ENCODE measurements at regions of chr11 and their contacts with region 1.

Region 1: DNA sequence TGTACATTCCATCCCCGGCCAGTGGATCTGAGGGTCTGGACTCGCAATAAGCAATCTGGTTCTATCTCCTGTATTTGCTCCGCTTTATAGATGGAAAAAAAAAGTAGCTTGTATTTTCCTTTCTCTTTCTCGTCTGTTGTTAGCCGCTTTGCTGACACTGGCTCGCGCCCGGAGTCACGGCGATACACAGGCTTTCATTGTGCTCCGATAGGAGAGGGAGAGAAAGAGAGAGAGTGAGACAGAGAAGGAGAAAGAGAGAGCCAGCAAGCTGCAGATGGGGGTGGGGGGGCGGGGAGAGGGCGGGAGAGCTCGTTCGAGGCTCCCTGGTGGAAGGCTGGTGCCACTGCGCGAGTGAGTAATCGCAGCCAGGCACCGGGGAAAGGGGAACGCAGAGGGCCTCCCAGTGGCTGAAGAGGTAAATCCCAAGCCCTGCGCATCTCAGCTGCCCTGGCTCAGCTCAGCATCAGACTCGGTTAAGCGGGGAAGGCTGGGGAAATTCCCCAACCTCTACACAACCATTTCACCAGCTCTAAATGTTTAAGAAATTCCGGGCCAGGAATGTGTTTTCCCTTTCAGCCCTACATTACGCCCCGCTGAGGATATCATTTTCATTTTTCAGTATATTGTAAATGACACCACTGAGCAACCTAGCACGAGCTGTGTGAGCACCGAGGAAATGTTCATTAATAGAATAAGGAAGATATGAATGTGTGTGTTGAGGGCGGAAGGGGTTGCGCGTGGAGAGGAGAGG is at the start of gene MAML2:
- DNase-seq: peak; percentile 93
- H3K4me3 Mint-ChIP-seq: peak within 1 kb of the TSS; percentile 95
- H3K27ac Mint-ChIP-seq: peak within 1 kb of the TSS; percentile 94
- H3K4me1 Mint-ChIP-seq: peaks cover 35% of the 10 kb centered on the region
- H3K27me3 Mint-ChIP-seq: no peaks in the 10 kb centered on the region
- CTCF ChIP-seq: peak; percentile 97
- total RNA-seq, gene MAML2: 5.3 and 8.6 TPM in 2 replicates

Region 2: DNA sequence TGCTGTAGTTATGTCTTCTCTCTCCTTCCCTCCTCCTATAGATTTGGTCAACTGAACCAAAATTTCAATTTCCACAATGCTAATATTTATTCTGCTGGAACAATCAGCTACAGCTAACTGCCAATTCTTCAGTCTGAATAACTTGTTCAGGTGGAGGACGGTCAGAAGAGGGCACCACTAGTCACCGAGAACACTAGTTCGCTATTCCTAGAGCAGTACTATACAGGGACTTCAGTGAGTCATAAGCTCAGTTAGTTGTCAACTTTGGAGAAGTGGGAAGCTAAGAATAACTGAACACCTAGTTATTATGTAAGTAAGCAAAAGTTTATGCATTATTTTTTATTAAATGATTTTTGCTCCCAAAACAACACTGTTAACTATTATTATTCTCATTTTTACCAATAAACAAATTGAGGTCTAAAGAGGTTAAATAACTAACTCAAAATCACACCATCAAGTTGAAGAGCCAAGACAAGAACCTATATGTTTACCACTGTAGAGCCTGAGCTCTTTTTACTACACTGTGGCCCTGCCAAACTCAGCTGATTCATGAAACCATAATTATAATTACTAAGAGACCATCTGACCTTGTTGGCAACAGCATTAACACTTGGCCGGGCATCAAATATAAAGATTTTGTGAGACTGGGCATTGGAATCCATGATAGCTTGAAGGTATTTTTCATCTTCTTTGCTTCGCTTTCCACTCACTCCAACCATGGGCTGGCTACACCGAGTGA is 493.9 kb before region 1 on chr11:
- CTCF ChIA-PET with region 1: interaction called, 21 read pairs
- POLR2A ChIA-PET with region 1: interaction called, 15 read pairs
- intact Hi-C with region 1: loop called (anchors 1 kb)
- DNase-seq: peak; percentile 76
- H3K4me3 Mint-ChIP-seq: no peak overlapping the region
- H3K27ac Mint-ChIP-seq: no peak overlapping the region
- H3K4me1 Mint-ChIP-seq: peaks cover 5% of the 10 kb centered on the region
- H3K27me3 Mint-ChIP-seq: no peaks in the 10 kb centered on the region
- CTCF ChIP-seq: peak; percentile 37

Region 3: GRCh38 chr11:96054870-96055705 is 288.0 kb before region 1 on chr11:
- CTCF ChIA-PET with region 1: interaction called, 200 read pairs
- POLR2A ChIA-PET with region 1: interaction called, 40 read pairs
- intact Hi-C with region 1: loop called (anchors 1 kb)
- DNase-seq: peak; percentile 49
- H3K4me3 Mint-ChIP-seq: no peak overlapping the region
- H3K27ac Mint-ChIP-seq: peak overlapping the region; percentile 61
- H3K4me1 Mint-ChIP-seq: peaks cover 13% of the 10 kb centered on the region
- H3K27me3 Mint-ChIP-seq: no peaks in the 10 kb centered on the region
- CTCF ChIP-seq: peak; percentile 47

Region 4: DNA sequence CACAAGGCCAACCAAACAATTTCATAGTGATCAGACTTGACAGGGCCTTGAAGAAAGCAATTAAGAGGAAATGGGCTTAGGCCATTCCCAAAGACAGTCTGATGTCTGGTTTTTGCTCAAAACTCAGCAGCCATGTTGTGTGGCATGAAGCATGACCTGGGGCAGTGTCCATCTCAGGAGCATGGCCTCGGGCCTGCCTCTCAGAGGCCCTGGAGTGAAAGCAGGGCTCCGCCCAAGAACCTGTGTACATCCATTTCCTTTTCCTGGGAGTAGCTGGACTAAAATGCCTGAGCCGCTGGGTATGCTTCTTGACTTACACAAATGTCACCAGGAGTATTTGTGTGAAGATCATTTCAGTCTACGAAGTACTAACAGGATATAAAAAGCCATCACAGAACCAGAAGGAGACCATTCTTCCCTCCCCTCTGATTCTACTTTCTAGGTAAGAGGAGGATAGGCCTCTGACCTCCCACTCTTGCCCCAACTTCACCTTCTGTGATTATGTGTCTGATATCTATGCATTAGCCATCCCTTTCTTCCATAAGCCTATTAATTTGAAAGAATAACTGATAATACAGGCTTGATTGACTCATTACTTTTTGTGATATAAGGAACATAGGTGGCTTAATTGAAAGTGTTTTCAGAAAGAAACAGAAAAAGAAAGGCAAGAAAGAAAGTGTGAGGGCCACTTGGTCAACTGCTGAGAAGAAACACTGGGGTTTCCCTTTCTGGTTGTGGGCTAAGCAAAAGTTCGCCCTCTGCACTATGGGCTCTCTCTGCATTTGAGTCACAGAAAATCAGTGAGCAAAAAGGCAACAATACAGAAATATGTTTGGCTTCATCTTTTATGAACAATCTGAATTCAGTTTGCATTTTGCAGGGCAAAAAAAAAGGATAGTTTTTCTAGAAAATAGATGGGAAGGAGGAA is 230.7 kb before region 1 on chr11:
- CTCF ChIA-PET with region 1: interaction called, 17 read pairs
- POLR2A ChIA-PET with region 1: interaction called, 3 read pairs
- intact Hi-C with region 1: no loop called
- DNase-seq: no peak
- H3K4me3 Mint-ChIP-seq: no peak overlapping the region
- H3K27ac Mint-ChIP-seq: peak overlapping the region; percentile 54
- H3K4me1 Mint-ChIP-seq: peaks cover 22% of the 10 kb centered on the region
- H3K27me3 Mint-ChIP-seq: no peaks in the 10 kb centered on the region
- CTCF ChIP-seq: no peak

Region 5: DNA sequence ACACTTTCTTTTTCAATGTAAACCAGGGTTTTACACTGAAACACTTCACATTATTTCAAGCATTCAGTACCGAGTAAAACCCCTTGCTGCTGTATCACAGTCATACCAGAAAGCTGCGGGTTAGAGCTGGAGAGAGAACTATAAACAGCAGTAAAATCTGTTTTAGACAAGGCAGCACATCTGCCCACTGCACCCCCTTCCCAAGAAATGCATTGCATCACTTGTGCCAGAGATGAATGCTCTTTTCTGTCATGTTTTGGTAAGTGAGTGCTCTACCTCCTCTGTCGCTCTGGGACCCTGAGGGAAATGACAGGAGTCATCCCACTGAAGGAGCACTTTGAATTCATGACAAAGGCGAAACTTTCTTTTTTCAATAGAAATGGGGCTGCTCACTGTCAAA is 107.4 kb before region 1 on chr11:
- CTCF ChIA-PET with region 1: interaction called, 86 read pairs
- POLR2A ChIA-PET with region 1: interaction called, 169 read pairs
- intact Hi-C with region 1: no loop called
- DNase-seq: no peak
- H3K4me3 Mint-ChIP-seq: no peak overlapping the region
- H3K27ac Mint-ChIP-seq: peak overlapping the region; percentile 63
- H3K4me1 Mint-ChIP-seq: peaks cover 7% of the 10 kb centered on the region
- H3K27me3 Mint-ChIP-seq: no peaks in the 10 kb centered on the region
- CTCF ChIP-seq: no peak

Region 6: DNA sequence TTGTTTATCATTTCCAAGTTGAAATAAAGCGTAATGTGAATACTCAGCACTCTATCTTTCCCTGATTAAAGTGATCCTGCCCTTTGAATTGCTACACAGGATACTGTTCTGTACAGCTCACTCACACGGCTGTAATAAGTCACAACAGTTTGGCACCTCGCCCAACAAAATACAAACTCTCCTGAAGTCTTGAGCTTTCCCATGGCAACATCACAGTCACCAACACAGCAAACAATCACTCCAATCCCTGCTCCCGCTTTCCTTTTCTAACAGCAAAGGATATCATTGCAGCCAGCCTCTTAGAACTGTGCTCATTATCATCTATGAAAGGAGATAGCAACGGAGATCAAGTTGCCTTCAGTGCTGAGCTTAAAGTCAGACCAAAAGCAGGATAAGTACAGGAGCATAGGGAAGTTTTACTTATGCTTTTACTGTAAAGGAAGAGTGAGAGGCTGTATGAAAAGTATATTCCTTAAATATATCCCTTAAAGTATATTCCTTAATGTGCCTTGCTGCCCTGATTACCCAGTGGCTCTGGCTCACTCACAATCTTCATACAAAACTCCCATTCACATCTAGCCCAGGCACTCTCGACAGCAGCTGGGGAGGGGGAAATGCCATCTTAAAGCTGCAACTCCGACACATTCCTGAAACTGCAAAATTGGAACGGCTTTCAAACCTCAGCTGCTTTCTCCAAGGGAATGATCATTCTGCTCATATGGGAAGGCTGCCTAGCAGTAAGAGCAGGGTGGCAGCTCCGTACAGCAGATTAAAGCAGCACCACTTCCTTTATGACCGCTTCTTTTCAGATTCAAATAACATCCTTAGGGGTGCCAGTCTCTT is 36.0 kb before region 1 on chr11:
- CTCF ChIA-PET with region 1: interaction called, 202 read pairs
- POLR2A ChIA-PET with region 1: interaction called, 217 read pairs
- intact Hi-C with region 1: loop called (anchors 2 kb)
- DNase-seq: peak; percentile 100
- H3K4me3 Mint-ChIP-seq: peak overlapping the region; percentile 68
- H3K27ac Mint-ChIP-seq: peak overlapping the region; percentile 97
- H3K4me1 Mint-ChIP-seq: peaks cover 59% of the 10 kb centered on the region
- H3K27me3 Mint-ChIP-seq: no peaks in the 10 kb centered on the region
- CTCF ChIP-seq: no peak